ENCODE measurements at regions of chr10 and their contacts with region 1.

Region 1: DNA sequence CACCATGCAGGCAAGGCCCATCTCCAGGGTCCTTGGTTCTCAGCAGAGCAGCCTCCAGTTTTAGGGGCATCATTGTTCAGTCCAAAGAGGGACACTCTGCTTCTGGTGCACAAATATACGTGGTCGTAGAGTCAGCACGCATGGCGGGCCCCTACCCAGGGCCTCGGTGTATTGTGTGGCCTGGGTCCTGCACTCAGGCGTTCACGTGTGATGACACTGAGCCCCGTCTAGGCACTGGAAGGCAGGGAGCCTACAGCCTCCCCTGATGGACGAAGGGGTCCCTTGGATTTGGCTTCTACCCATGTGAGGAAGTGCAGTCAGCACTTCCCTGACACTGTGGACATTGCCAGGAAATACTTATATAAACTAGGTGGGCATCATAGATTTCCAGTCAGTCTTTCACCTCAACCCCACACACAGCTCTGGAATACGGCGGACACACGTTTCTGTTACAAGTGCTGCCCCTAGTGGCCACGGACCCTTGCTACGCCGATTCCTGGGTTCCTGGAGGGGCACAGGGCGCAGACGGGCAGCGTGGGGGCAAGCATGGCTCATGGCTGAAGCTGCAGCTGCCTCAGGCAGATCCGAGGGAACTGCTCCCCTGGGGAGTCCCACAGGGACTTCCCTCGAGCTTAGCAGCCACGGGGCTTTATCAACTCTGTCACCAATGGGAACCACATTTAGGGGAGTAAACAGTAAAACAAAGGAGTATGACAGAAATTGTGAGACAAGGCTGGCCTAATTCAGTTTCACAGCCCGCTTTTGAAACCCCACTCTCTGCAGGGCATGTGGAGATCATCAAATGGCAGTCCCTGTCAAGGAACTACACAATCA is 25.4 kb downstream of the AIFM2 start:
- DNase-seq: peak; percentile 80
- ATAC-seq: peak; percentile 97
- H3K4me3 ChIP-seq: peak overlapping the region; percentile 8; the same call in 1 of the 2 replicates
- H3K27ac ChIP-seq: peak overlapping the region; percentile 56
- H3K4me1 ChIP-seq: peaks cover 18% of the 10 kb centered on the region
- H3K27me3 ChIP-seq: no peaks in the 10 kb centered on the region
- CTCF ChIP-seq: peak; percentile 38 to 66 (median 62)
- EP300 ChIP-seq: peak; percentile 40 to 69; a peak in 2 of 4 replicates
- POLR2A ChIP-seq: no peak; the same call in 1 of the 2 replicates
- RAD21 ChIP-seq: 0 out of 2 replicates have a peak, but pooled peaks have one; percentile 12

Region 2: DNA sequence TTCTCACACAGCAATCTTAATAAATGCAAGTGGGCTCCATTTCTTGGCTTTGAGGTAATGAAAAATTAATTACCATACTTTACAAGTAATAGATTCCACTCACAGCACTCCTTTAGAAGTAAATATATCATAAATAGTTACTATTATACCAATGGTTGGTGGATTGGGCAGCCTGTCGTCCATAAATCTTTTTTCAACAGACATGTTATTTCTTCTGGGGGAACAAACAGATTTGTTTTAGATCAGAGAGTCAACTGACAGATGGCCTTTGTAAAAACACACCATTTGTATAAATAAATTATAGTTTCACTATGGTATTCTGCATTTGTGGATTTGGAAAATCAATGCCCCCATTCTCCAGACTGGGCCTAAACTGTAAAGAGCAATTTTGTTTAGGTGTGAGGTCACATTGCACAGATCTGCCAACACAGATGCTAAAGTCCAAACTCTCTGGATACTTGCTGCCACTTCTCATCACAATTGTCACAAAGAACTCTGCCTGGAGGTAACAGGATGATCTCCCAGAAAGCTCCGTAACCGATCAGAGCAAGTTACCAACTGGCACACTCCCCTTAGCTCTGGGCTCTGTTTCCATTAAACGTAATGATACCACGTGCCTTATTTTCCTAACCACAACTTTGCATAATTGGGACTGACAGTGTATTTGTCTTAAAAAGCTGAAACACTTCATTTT is 59.0 kb before region 1 on chr10:
- CTCF ChIA-PET with region 1: no interaction called
- POLR2A ChIA-PET with region 1: no interaction called
- RAD21 ChIA-PET with region 1: no interaction called
- SMC1A ChIA-PET with region 1: no interaction called
- in situ Hi-C with region 1: no loop called
- intact Hi-C with region 1: no loop called
- DNase-seq: no peak
- ATAC-seq: no peak
- H3K4me3 ChIP-seq: no peak overlapping the region
- H3K27ac ChIP-seq: no peak overlapping the region
- H3K4me1 ChIP-seq: no peaks in the 10 kb centered on the region
- H3K27me3 ChIP-seq: peaks cover 4 to 5% of the 10 kb centered on the region in 2 experiments; a peak in 3 of 4 replicates
- CTCF ChIP-seq: no peak
- EP300 ChIP-seq: no peak
- POLR2A ChIP-seq: no peak
- RAD21 ChIP-seq: no peak

Region 3: DNA sequence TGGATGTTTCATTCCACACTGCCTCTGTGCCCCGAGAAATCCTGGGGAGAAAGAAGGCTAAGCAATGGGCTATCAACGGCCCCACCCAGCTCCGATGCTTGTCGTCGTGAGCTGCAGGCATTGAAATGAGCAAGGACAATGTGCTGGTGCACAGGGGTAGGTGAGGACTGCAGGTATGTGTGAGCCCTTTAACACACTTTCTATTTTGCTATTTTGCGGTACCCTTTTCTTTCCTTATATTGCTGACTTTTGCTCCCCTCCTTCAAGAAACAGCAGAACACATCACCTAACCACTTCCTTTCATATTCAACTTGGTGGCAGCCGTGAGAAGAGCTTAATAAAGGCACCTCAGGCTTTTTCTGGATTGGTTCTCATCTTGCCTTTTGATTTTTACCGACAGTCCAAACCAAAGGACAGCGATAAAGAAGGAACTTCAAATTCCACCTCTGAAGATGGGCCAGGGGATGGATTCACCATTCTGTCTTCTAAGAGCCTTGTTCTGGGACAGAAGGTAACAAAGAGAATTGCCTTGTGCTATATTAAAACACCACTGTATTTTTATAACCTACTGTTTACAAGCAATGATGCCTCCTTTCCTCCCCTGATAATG is 13.7 kb before region 1 on chr10:
- CTCF ChIA-PET with region 1: interaction called, 21 read pairs
- POLR2A ChIA-PET with region 1: interaction called, 15 read pairs
- RAD21 ChIA-PET with region 1: interaction called, 6 read pairs
- SMC1A ChIA-PET with region 1: interaction called, 9 read pairs
- in situ Hi-C with region 1: no loop called
- intact Hi-C with region 1: no loop called
- DNase-seq: no peak
- ATAC-seq: peak; percentile 41
- H3K4me3 ChIP-seq: no peak overlapping the region
- H3K27ac ChIP-seq: no peak overlapping the region
- H3K4me1 ChIP-seq: peaks cover 7% of the 10 kb centered on the region; the same call in 1 of the 2 replicates
- H3K27me3 ChIP-seq: no peaks in the 10 kb centered on the region; a peak in 1 of 4 replicates
- CTCF ChIP-seq: no peak
- EP300 ChIP-seq: no peak
- POLR2A ChIP-seq: no peak
- RAD21 ChIP-seq: no peak

Measured in GM12878 (cell line).